ENCODE measurements at regions of chr20 and their contacts with region 1.

Region 1: DNA sequence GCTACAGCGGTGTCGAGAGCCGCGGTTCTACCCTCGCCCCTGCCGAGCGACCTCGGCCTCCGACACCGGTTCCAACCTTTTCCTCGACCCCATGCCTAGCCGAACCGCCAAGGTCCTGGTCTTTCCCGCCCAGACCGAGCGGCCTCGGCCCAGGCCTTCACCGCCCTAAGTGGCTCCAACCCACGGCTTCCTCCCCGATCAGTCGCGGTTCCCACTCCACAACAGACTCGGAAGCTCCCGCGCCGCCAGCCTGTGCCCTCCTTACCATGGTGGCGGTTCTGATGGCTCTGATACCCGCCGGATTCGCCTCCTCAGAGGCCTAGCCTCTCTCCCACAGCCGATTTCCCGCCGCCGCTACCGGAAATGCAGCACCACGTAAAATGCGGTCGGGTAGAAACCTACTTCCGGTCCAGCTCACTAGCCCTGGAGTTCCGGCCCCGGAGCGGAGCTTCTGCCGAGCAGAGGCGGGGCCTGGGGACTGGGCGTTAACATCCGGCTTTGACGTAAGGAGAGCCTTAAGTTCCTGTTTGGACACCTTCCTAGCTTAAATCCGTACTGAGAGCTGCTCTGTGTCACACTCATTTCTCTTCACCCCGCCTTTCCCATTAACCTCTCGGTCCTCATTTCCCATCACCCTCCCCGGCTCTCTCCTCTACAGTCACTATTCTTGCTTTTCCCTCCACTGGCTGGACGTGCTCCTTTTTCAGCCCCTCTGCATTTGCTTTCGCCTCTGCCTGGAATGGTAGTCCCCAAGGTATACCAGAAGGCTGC is at the start of gene SNRPB:
- DNase-seq: peak; percentile 95 to 98 (median 96)
- H3K4me3 ChIP-seq: peak within 1 kb of the TSS; percentile 85 to 90
- H3K4me3 Mint-ChIP-seq: peak within 1 kb of the TSS; percentile 96 to 99 (median 98)
- H3K27ac ChIP-seq: peak within 1 kb of the TSS; percentile 79
- H3K27ac Mint-ChIP-seq: peak within 1 kb of the TSS; percentile 96 to 99 (median 98)
- H3K4me1 ChIP-seq: peaks cover 32% of the 10 kb centered on the region
- H3K4me1 Mint-ChIP-seq: peaks cover 28 to 51% (median 39%) of the 10 kb centered on the region in 4 donors
- H3K27me3 ChIP-seq: no peaks in the 10 kb centered on the region
- H3K27me3 Mint-ChIP-seq: no peaks in the 10 kb centered on the region
- total RNA-seq, gene SNRPB: 96.2 to 99.3 TPM

Region 2: DNA sequence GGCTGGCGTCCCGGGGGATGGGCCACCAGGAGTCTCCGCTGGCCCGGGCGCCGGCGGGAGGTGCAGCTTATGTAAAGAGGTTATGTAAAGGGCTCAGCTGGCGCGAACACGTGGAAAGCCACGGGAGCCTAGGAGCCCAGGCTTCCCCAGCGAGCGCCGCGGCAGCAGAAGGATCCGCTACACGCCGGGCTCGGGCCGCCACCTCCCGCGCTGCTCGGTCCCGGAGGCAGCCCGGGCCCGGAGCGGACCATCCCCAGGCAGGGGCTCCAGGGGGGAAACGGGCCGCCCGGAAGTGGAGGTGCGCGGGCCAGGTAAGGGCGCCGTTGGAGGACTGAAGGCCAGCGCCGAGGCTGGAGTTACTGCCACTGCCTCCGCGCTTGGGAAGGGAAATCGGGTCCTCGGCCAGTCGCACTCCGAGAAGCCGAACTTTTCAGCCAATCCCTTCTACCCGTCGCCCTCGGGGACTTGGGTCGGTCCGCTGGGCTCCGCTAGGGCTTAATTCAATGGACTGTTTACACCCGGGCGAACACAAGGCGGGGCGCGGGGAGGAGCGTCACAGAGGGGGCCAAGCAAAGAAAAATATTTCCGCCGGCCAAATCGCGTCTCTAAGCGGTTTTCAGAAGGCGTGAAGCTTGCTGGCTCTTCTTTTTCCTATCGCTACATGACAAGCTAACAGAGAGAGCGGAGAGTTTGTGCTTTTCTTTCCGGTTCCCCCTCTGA is 368.6 kb before region 1 on chr20:
- CTCF ChIA-PET with region 1: no interaction called
- POLR2A ChIA-PET with region 1: interaction called, 14 read pairs
- intact Hi-C with region 1: loop called (anchors 2 kb)
- DNase-seq: peak; percentile 92 to 95 (median 94)
- H3K4me3 ChIP-seq: peak overlapping the region; percentile 33 to 98
- H3K4me3 Mint-ChIP-seq: peak overlapping the region; percentile 92 to 98 (median 96)
- H3K27ac ChIP-seq: peak overlapping the region; percentile 97
- H3K27ac Mint-ChIP-seq: peak overlapping the region; percentile 100
- H3K4me1 ChIP-seq: peaks cover 45% of the 10 kb centered on the region
- H3K4me1 Mint-ChIP-seq: peaks cover 30 to 59% (median 42%) of the 10 kb centered on the region in 4 donors
- H3K27me3 ChIP-seq: no peaks in the 10 kb centered on the region
- H3K27me3 Mint-ChIP-seq: peaks cover 0 to 2% of the 10 kb centered on the region in 2 donors

Region 3: DNA sequence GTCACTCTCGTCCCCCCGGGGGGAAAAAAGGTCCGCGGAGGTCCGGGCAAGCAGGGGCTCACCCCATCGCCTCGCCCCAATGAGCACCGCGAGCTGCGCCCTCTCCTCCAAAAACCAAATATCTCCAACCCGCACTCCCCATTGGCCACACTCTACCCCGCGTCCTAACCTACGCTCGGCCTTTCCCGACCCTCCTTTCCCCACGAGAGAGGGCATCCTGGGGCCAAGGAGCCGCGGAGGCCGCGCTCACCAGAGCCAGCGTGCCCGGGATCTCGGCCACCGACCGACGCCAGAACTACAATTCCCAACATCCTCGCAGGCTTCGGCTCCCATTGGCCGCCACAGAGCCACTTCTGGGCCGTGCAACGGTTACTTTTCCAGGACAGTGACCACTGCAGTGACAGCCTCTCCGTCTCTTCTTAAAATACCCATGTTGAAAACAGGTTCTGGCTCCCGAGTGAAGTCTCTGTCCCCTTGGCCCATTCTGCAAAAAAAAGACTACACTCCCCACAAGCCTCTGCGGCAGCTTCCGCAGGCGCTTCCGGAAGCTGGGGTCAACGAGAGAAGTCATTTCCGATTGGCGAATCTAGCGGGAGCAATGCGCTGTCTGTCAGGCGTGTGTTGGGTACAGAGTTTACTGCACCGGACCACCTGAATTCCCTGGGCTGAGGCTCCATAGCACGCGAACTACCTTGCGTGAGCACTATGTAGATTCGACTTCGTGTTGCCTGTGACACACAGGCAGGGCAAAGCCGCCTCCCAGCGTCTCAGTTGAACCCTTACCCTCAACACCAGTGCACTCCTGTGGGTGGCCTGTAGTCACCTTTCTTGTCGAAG is 38.2 kb after region 1 on chr20 and contains the start of gene ZNF343:
- CTCF ChIA-PET with region 1: no interaction called
- POLR2A ChIA-PET with region 1: interaction called, 36 read pairs
- intact Hi-C with region 1: loop called (anchors 1 kb)
- DNase-seq: peak; percentile 81 to 84 (median 83)
- H3K4me3 ChIP-seq: peak within 1 kb of the TSS; percentile 89 to 96
- H3K4me3 Mint-ChIP-seq: peak within 1 kb of the TSS; percentile 98 to 100 (median 100)
- H3K27ac ChIP-seq: peak within 1 kb of the TSS; percentile 62
- H3K27ac Mint-ChIP-seq: peak within 1 kb of the TSS; percentile 92 to 99 (median 96)
- H3K4me1 ChIP-seq: peaks cover 15% of the 10 kb centered on the region
- H3K4me1 Mint-ChIP-seq: peaks cover 10 to 22% (median 16%) of the 10 kb centered on the region in 4 donors
- H3K27me3 ChIP-seq: peaks cover 6% of the 10 kb centered on the region
- H3K27me3 Mint-ChIP-seq: peaks cover 8 to 14% of the 10 kb centered on the region in 2 donors
- total RNA-seq, gene ZNF343: 11.8 to 12.0 TPM

Region 4: GRCh38 chr20:2651772-2652723 is 181.4 kb after region 1 on chr20 and contains the start of gene NOP56:
- CTCF ChIA-PET with region 1: interaction called, 4 read pairs
- POLR2A ChIA-PET with region 1: interaction called, 52 read pairs
- intact Hi-C with region 1: loop called (anchors 1 kb)
- DNase-seq: peak; percentile 89 to 99 (median 95)
- H3K4me3 ChIP-seq: peak within 1 kb of the TSS; percentile 85 to 88
- H3K4me3 Mint-ChIP-seq: peak within 1 kb of the TSS; percentile 90 to 92 (median 91)
- H3K27ac ChIP-seq: peak within 1 kb of the TSS; percentile 80
- H3K27ac Mint-ChIP-seq: peak within 1 kb of the TSS; percentile 89 to 94 (median 92)
- H3K4me1 ChIP-seq: peaks cover 31% of the 10 kb centered on the region
- H3K4me1 Mint-ChIP-seq: peaks cover 21 to 60% (median 29%) of the 10 kb centered on the region in 4 donors
- H3K27me3 ChIP-seq: no peaks in the 10 kb centered on the region
- H3K27me3 Mint-ChIP-seq: no peaks in the 10 kb centered on the region
- total RNA-seq, gene NOP56: 258 to 270 TPM

Region 5: GRCh38 chr20:2741463-2741862 is 270.9 kb after region 1 on chr20:
- CTCF ChIA-PET with region 1: no interaction called
- POLR2A ChIA-PET with region 1: no interaction called
- intact Hi-C with region 1: no loop called
- DNase-seq: peak; percentile 68 to 79 (median 72)
- H3K4me3 ChIP-seq: peak overlapping the region; percentile 7 to 49
- H3K4me3 Mint-ChIP-seq: peak overlapping the region; percentile 60 to 84 (median 74)
- H3K27ac ChIP-seq: peak overlapping the region; percentile 42
- H3K27ac Mint-ChIP-seq: peak overlapping the region; percentile 87 to 98 (median 91)
- H3K4me1 ChIP-seq: peaks cover 42% of the 10 kb centered on the region
- H3K4me1 Mint-ChIP-seq: peaks cover 37 to 51% (median 44%) of the 10 kb centered on the region in 4 donors
- H3K27me3 ChIP-seq: no peaks in the 10 kb centered on the region
- H3K27me3 Mint-ChIP-seq: no peaks in the 10 kb centered on the region

Region 6: GRCh38 chr20:2752567-2753460 is 282.2 kb after region 1 on chr20:
- CTCF ChIA-PET with region 1: no interaction called
- POLR2A ChIA-PET with region 1: no interaction called
- intact Hi-C with region 1: loop called (anchors 2 kb)
- DNase-seq: peak in 4 of 5 donors; percentile 48 to 55 (median 52)
- H3K4me3 ChIP-seq: peak overlapping the region; percentile 28 to 33
- H3K4me3 Mint-ChIP-seq: peak overlapping the region; percentile 81 to 89 (median 86)
- H3K27ac ChIP-seq: no peak overlapping the region
- H3K27ac Mint-ChIP-seq: peak overlapping the region; percentile 57 to 90 (median 74)
- H3K4me1 ChIP-seq: peaks cover 27% of the 10 kb centered on the region
- H3K4me1 Mint-ChIP-seq: peaks cover 16 to 40% (median 28%) of the 10 kb centered on the region in 4 donors
- H3K27me3 ChIP-seq: peaks cover 5% of the 10 kb centered on the region
- H3K27me3 Mint-ChIP-seq: peaks cover 2 to 9% of the 10 kb centered on the region in 2 donors